ENCODE measurements at regions of chr19 and their contacts with region 1.

Region 1: GRCh38 chr19:54029930-54030490 is 33.7 kb downstream of the VSTM1 start:
- DNase-seq: peak in 6 of 10 donors; percentile 52 to 92 (median 68)

Region 2: GRCh38 chr19:53671663-53672062 is 358.3 kb before region 1 on chr19:
- intact Hi-C with region 1: no loop called
- DNase-seq: peak in 1 of 10 donors; percentile 20

Region 3: GRCh38 chr19:53792721-53793433 is 237.1 kb before region 1 on chr19:
- intact Hi-C with region 1: loop called (anchors 5 kb)
- DNase-seq: peak; percentile 69 to 97 (median 86)

Region 4: DNA sequence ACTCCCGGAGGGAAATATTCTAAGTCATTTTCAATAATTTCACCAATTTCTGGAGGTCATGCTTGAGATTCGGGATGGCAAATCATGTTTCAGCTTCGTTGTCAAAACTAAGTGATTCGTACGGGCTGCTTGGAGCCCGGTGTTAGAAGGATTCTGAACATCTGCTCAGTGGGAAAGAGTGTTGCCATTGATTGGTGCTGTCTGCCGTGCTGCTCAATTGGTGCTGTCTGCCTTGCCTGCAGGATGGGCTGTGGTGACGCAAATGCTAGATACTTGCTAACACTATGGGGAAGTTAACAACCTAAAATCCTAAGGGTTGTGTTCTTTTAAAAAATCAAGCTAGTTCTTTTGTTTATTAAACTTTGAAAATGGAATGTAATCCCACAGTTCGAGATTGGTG is 84.6 kb before region 1 on chr19:
- intact Hi-C with region 1: no loop called
- DNase-seq: peak in 8 of 10 donors; percentile 41 to 91 (median 56)

Region 5: DNA sequence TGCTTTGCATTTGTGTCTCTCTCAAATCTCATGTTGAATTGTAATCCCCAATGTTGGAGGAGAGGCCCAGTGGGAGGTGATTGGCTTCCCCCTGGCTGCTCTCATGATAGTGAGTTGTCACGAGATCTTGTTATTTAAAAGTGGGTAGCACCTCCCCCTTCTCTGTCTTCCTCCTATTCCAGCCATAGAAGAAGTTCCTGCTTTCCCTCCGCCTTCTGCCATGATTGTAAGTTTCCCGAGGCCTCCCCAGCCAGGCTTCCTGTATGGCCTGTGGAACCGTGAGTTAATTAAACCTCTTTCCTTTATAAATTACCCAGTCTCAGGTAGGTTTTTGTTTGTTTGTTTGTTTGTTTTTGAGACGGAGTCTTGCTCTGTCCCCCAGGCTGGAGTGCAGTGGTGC is 305.2 kb after region 1 on chr19:
- intact Hi-C with region 1: no loop called
- DNase-seq: no peak

Measured in posterior cingulate gyrus (tissue), 11 donors.